Activated CD8-positive, alpha-beta T cell treated with anti-CD3 and anti-CD28 coated beads for 36 hours (primary cell): ENCODE measurements at regions of chr11 and their contacts with region 1.

Region 1: DNA sequence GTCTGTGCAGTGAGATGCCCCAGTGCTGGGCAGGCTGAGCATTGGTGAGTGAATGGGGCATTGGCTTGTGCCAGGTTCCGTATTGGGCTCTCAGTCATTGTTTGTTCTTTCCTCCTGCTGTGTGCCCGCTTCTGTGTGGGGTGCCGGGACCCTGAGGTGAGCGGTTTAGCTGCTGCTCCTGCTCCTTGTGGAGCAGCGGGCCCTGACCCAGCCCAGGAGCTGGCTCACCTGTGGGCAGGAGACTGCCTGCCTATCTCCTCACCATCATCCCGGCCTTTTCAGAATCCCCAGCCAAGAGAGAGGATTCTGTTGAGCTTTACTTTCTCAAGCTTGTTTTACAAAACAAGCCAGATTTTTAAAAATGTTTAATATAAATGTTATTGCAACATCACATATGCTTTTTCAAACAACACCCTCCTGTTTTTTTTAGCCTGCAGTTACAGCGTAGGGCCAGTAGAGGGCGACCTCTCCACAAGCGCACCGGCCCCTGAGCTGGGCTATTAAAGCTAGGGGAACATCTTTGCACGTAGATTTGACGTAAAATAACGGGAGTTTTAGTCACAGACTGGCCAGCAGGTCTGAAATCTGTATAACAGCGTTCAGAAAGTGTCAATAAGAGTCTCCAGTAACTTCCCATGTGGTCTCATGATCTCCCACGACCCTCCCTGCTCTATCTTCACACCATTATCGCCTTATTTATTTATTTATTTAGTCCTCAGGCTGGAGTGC is 25.1 kb upstream of the RELT start:
- DNase-seq: peak; percentile 74
- ATAC-seq: peak; percentile 94
- H3K4me3 Mint-ChIP-seq: no peak overlapping the region
- H3K27ac Mint-ChIP-seq: peak overlapping the region; percentile 41
- H3K4me1 Mint-ChIP-seq: peaks cover 2% of the 10 kb centered on the region
- H3K27me3 Mint-ChIP-seq: no peaks in the 10 kb centered on the region
- CTCF ChIP-seq: peak; percentile 97

Region 2: DNA sequence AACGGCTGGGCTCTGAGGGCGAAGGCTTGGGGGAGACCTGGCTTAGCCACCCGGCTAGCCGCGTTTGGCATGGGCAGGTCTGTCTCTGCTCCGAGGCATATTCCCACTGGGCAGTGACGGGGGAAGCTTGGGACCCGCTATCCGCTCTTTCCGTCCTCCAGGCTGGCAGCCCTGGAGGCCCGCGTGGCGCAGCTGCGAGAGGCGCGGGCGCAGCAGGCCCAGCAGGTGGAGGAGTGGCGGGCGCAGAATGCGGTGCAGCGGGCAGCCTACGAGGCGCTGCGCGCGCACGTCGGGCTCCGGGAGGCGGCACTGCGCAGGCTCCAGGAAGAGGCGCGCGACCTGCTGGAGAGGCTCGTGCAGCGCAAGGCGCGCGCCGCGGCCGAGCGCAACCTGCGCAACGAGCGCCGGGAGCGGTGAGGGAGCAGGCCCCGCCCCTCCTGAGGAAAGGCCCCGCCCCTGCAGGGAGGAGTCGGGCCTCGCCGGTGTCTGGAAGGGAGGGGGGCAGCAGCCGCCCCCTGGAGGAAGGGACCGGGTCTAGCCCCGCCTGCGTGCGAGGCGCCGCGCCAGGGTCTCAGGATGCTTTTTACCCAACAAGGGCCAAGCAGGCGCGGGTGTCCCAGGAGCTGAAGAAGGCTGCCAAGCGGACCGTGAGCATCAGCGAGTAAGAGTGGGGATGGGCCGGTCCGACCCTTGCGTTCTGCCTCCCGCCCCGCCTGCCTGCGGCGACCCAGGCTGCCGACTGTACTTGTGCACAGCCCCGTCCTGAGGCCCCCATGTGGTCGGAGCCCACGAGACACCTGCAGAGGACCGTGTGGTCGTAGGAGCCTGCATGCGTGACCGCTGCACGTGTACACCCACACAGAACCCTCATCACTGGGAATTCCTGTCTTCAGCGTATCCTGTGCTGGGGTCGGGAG is 528.9 kb before region 1 on chr11:
- CTCF ChIA-PET with region 1: no interaction called
- POLR2A ChIA-PET with region 1: no interaction called
- intact Hi-C with region 1: no loop called
- DNase-seq: peak; percentile 80
- ATAC-seq: peak; percentile 89
- H3K4me3 Mint-ChIP-seq: peak overlapping the region; percentile 62
- H3K27ac Mint-ChIP-seq: peak overlapping the region; percentile 24
- H3K4me1 Mint-ChIP-seq: peaks cover 19% of the 10 kb centered on the region
- H3K27me3 Mint-ChIP-seq: no peaks in the 10 kb centered on the region
- CTCF ChIP-seq: no peak

Region 3: DNA sequence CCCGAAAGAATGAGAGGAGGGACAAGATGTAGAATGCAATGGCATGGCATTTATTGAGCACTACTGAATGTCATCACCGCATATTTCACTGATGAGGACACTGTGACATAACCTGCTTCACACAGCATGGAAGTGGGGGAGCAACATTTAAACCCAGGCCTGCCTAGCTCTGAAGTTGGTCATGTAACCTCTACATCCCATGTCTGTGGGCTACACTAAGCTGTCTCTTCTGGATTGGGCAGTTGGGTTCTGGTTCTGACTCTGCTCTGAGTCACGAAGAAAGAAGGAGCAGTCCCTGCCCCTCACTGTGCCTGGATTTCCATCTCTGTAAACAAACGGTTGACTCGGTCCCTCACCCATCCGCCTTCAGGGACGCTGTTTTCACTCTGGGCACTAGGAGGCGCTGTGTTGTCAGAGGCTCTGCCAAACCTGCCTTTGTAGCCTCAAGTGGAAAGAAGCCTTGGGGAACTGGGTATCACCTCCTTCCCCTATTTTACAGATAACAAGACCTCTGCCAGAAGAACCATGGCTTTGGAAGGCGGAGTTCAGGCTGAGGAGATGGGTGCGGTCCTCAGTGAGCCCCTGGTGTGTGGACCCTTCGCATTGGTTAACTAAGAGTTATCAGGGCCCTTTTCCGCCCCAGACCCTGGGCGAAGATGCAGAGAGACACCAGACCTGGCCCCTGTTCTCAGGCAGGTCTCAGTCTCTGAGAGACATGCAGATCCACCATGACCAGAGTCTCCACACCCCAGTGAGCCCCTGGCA is 55.7 kb before region 1 on chr11:
- CTCF ChIA-PET with region 1: interaction called, 14 read pairs
- POLR2A ChIA-PET with region 1: interaction called, 3 read pairs
- intact Hi-C with region 1: no loop called
- DNase-seq: peak; percentile 88
- ATAC-seq: peak; percentile 91
- H3K4me3 Mint-ChIP-seq: no peak overlapping the region
- H3K27ac Mint-ChIP-seq: no peak overlapping the region
- H3K4me1 Mint-ChIP-seq: peaks cover 2% of the 10 kb centered on the region
- H3K27me3 Mint-ChIP-seq: peaks cover 7% of the 10 kb centered on the region
- CTCF ChIP-seq: peak; percentile 86

Region 4: DNA sequence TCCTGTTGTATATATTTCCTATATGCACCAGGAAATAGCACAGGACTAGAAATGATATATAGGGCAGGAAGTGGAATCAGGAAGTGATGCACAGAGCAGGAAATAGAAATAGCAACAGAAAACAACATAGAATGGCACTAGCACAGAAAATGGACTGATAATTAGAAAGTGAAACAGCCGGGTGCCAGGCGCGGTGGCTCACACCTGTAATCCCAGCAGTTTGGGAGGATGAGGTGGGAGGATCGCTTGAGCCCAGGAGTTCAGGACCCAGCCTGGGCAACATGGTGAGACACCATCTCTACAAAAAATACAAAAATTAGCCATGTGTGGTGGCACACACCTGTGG is 15.2 kb after region 1 on chr11:
- CTCF ChIA-PET with region 1: interaction called, 52 read pairs
- POLR2A ChIA-PET with region 1: interaction called, 5 read pairs
- intact Hi-C with region 1: no loop called
- DNase-seq: peak; percentile 55
- ATAC-seq: peak; percentile 76
- H3K4me3 Mint-ChIP-seq: no peak overlapping the region
- H3K27ac Mint-ChIP-seq: peak overlapping the region; percentile 89
- H3K4me1 Mint-ChIP-seq: peaks cover 33% of the 10 kb centered on the region
- H3K27me3 Mint-ChIP-seq: no peaks in the 10 kb centered on the region
- CTCF ChIP-seq: no peak

Region 5: GRCh38 chr11:73393479-73394380 is 42.7 kb after region 1 on chr11:
- CTCF ChIA-PET with region 1: interaction called, 133 read pairs
- POLR2A ChIA-PET with region 1: interaction called, 4 read pairs
- intact Hi-C with region 1: loop called (anchors 5 kb)
- DNase-seq: peak; percentile 82
- ATAC-seq: peak; percentile 81
- H3K4me3 Mint-ChIP-seq: no peak overlapping the region
- H3K27ac Mint-ChIP-seq: peak overlapping the region; percentile 23
- H3K4me1 Mint-ChIP-seq: peaks cover 2% of the 10 kb centered on the region
- H3K27me3 Mint-ChIP-seq: no peaks in the 10 kb centered on the region
- CTCF ChIP-seq: peak; percentile 67

Region 6: GRCh38 chr11:73625696-73626318 is 274.7 kb after region 1 on chr11:
- CTCF ChIA-PET with region 1: interaction called, 21 read pairs
- POLR2A ChIA-PET with region 1: no interaction called
- intact Hi-C with region 1: no loop called
- DNase-seq: peak; percentile 78
- ATAC-seq: peak; percentile 94
- H3K4me3 Mint-ChIP-seq: no peak overlapping the region
- H3K27ac Mint-ChIP-seq: no peak overlapping the region
- H3K4me1 Mint-ChIP-seq: no peaks in the 10 kb centered on the region
- H3K27me3 Mint-ChIP-seq: peaks cover 8% of the 10 kb centered on the region
- CTCF ChIP-seq: peak; percentile 91